Adrenal gland (tissue), 19 donors: ENCODE measurements at regions of chr5 and their contacts with region 1.

Region 1: GRCh38 chr5:134184155-134185135 is 7.7 kb upstream of the SKP1 start:
- DNase-seq: peak; percentile 69 to 87 (median 75)
- H3K4me3 ChIP-seq: no peak overlapping the region
- H3K27ac ChIP-seq: no peak overlapping the region
- H3K4me1 ChIP-seq: no peaks in the 10 kb centered on the region
- H3K27me3 ChIP-seq: no peaks in the 10 kb centered on the region
- CTCF ChIP-seq: peak; percentile 80 to 95 (median 91)
- POLR2A ChIP-seq: no peak

Region 2: DNA sequence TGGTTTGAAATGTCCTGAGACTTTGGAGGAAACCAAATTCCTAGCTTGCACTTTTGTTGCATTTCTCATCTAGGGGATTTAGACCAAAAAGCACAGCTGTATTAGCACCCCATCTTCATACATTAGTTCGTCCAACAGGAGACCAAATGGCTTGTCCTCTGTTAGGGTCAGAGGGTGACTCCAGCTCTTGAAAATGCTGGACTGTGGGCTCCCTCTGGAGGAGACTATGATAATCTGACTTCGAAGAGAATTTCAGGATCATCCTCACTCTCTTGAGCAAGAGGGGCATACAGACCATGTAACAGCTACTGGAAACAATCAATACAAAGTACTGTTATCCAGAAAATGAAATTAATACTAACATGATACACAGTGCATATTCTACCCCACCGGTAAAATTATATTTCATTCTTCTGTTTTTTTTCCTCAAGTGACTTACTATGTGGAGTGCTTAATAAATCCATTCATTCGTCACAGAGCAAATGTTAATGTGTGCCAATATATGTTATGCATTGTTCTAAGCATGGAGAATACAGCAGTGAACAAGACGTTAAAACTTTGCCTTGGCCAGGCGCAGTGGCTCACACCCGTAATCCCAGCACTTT is 105.2 kb after region 1 on chr5:
- intact Hi-C with region 1: loop called (anchors 2 kb)
- DNase-seq: peak; percentile 43 to 72 (median 61)
- H3K4me3 ChIP-seq: no peak overlapping the region
- H3K27ac ChIP-seq: no peak overlapping the region
- H3K4me1 ChIP-seq: no peaks in the 10 kb centered on the region
- H3K27me3 ChIP-seq: no peaks in the 10 kb centered on the region
- CTCF ChIP-seq: peak; percentile 50 to 92 (median 85)
- POLR2A ChIP-seq: no peak

Region 3: GRCh38 chr5:134592141-134592746 is 407.8 kb after region 1 on chr5:
- intact Hi-C with region 1: loop called in 1 of 2 experiments (anchors 10 kb)
- DNase-seq: no peak
- H3K4me3 ChIP-seq: no peak overlapping the region
- H3K27ac ChIP-seq: no peak overlapping the region
- H3K4me1 ChIP-seq: no peaks in the 10 kb centered on the region
- H3K27me3 ChIP-seq: no peaks in the 10 kb centered on the region
- CTCF ChIP-seq: no peak
- POLR2A ChIP-seq: no peak